Astrocyte of the cerebellum (primary cell): ENCODE measurements at regions of chr11 and their contacts with region 1.

Region 1: GRCh38 chr11:125505492-125506080 is 9.5 kb upstream of the FEZ1 start:
- DNase-seq: no peak
- H3K4me3 ChIP-seq: no peak overlapping the region
- CTCF ChIP-seq: no peak

Region 2: DNA sequence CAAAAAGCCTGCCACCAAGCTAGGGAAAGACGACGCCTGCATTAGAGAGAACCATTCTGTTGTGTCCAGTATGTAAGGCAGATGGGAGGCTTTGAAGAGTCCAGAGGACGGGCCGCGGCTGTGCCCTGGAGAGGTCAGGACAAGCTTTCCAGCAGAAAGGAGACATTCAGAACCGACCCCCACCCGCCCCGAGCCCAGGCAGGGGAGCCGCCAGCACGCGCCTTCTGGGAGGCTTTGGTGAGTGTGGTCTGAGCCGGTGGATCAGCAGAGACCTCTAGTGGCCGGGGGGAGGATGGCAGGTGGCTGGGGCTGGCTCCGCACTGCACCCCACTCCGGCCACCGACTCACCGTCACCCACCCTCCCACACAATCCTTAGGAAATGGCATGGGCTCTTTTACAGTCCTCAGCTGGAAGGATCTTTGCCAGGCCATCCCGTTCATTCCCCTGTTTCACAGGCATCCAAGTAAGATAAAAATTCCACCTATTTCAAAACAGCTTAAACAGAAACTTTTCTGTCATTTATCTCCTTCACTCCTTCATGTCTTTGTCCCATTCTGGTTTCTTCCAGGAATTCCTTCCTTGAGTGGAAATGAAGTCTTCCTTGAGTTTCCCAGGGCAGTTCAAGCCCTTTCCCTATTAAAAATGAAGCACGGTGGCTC is 100.7 kb before region 1 on chr11:
- in situ Hi-C with region 1: no loop called
- DNase-seq: no peak
- H3K4me3 ChIP-seq: no peak overlapping the region
- CTCF ChIP-seq: peak; percentile 98

Region 3: GRCh38 chr11:125423247-125423849 is 82.2 kb before region 1 on chr11:
- in situ Hi-C with region 1: no loop called
- DNase-seq: no peak
- H3K4me3 ChIP-seq: no peak overlapping the region
- CTCF ChIP-seq: peak; percentile 51

Region 4: DNA sequence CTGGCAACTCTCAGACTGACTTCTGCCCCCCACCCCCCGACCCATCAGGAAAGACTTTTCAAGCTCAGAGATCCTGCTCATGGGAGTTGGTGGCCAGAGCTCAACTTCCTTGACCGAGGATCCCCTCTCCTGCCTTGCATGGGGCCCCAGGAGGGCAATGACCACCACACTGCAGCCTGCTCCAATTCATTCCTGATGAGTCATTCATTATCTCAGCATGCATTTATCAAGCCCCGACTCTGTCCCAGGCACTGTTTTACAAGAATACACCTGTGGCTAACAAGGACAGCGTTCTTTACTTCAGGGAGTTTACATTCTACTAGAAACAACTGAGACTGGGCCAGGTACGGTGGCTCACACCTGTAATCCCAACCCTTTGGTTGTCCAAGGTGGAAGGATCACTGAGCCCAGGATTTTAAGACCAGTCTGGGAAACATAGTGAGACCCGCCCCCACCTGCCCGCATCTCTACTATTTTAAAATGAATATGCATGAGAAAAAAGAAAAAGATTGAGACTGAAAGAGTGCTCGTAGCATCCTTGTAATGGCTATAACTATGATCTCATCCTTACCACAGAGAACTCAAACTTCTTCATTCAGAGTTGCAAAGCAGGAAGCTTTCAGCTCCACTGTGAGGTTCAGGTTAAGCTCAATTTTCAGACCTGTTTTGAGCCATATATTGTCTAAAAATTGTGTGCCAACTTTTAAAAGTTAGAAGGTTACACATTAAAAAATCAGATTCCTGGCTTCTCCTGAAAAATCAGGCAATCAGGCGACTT is 69.9 kb before region 1 on chr11:
- in situ Hi-C with region 1: loop called (anchors 5 kb)
- DNase-seq: no peak
- H3K4me3 ChIP-seq: no peak overlapping the region
- CTCF ChIP-seq: no peak

Region 5: GRCh38 chr11:125956391-125957134 is 451.0 kb after region 1 on chr11:
- in situ Hi-C with region 1: no loop called
- DNase-seq: no peak
- H3K4me3 ChIP-seq: no peak overlapping the region
- CTCF ChIP-seq: no peak